ENCODE measurements at regions of chr9 and their contacts with region 1.

Region 1: GRCh38 chr9:121992571-121993212 is 100.4 kb downstream of the TTLL11 start:
- DNase-seq: peak in 4 of 5 donors; percentile 58 to 71 (median 64)
- ATAC-seq: peak; percentile 61 to 78 (median 69)
- H3K4me3 ChIP-seq: no peak overlapping the region
- H3K27ac ChIP-seq: no peak overlapping the region
- H3K4me1 ChIP-seq: peaks cover 0 to 25% (median 4%) of the 10 kb centered on the region in 12 donors
- H3K27me3 ChIP-seq: no peaks in the 10 kb centered on the region
- CTCF ChIP-seq: peak; percentile 77 to 95 (median 86)
- POLR2A ChIP-seq: no peak

Region 2: GRCh38 chr9:121634329-121635261 is 358.1 kb before region 1 on chr9:
- intact Hi-C with region 1: loop called in 9 of 10 experiments (anchors 2 to 10 kb)
- DNase-seq: no peak
- ATAC-seq: peak; percentile 60 to 79 (median 64)
- H3K4me3 ChIP-seq: no peak overlapping the region
- H3K27ac ChIP-seq: peak overlapping the region in 5 of 12 donors; percentile 6 to 66 (median 34)
- H3K4me1 ChIP-seq: peaks cover 15 to 60% (median 43%) of the 10 kb centered on the region in 12 donors
- H3K27me3 ChIP-seq: no peaks in the 10 kb centered on the region
- CTCF ChIP-seq: peak; percentile 35 to 74 (median 62)
- POLR2A ChIP-seq: no peak

Region 3: DNA sequence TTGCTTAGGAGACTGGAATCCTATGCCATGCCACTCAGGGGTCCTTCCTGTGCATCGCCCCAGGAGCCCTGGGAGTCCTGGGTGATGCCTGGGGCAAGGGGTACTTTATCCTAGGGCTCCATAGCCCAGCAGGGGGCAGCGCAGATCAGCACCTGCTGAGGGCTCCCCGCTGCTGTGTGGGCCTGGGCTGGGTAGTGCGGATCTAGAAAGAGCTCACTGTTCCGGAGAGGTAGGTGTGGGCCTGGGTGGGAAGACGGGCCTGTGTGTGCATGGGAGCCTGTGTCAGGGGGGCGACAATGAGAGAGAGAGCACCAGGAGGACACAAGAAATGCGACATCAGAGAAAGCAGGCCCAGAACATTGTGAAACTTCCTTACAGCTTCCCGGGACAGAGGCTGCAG is 352.6 kb before region 1 on chr9:
- intact Hi-C with region 1: loop called in 9 of 10 experiments (anchors 2 to 10 kb)
- DNase-seq: peak; percentile 62 to 82 (median 65)
- ATAC-seq: peak; percentile 55 to 81 (median 74)
- H3K4me3 ChIP-seq: no peak overlapping the region
- H3K27ac ChIP-seq: peak overlapping the region in 10 of 12 donors; percentile 36 to 66 (median 55)
- H3K4me1 ChIP-seq: peaks cover 19 to 75% (median 52%) of the 10 kb centered on the region in 12 donors
- H3K27me3 ChIP-seq: no peaks in the 10 kb centered on the region
- CTCF ChIP-seq: peak; percentile 53 to 76 (median 64)
- POLR2A ChIP-seq: no peak

Region 4: GRCh38 chr9:121686930-121687541 is 305.7 kb before region 1 on chr9:
- intact Hi-C with region 1: loop called in 9 of 10 experiments (anchors 2 to 10 kb)
- DNase-seq: peak in 4 of 5 donors; percentile 71 to 84 (median 76)
- ATAC-seq: peak; percentile 56 to 72 (median 62)
- H3K4me3 ChIP-seq: no peak overlapping the region
- H3K27ac ChIP-seq: peak overlapping the region in 4 of 12 donors; percentile 14 to 42 (median 36)
- H3K4me1 ChIP-seq: peaks cover 3 to 68% (median 28%) of the 10 kb centered on the region in 12 donors
- H3K27me3 ChIP-seq: no peaks in the 10 kb centered on the region
- CTCF ChIP-seq: peak; percentile 70 to 91 (median 82)
- POLR2A ChIP-seq: no peak

Region 5: GRCh38 chr9:121692606-121693387 is 299.9 kb before region 1 on chr9:
- intact Hi-C with region 1: loop called (anchors 2 to 10 kb)
- DNase-seq: peak in 2 of 5 donors; percentile 61 to 67
- ATAC-seq: peak; percentile 31 to 86 (median 74)
- H3K4me3 ChIP-seq: no peak overlapping the region
- H3K27ac ChIP-seq: peak overlapping the region in 11 of 12 donors; percentile 1 to 70 (median 42)
- H3K4me1 ChIP-seq: peaks cover 6 to 48% (median 30%) of the 10 kb centered on the region in 12 donors
- H3K27me3 ChIP-seq: peaks cover 0 to 11% (median 0%) of the 10 kb centered on the region in 9 donors
- CTCF ChIP-seq: no peak
- POLR2A ChIP-seq: no peak

Region 6: GRCh38 chr9:121744002-121744686 is 248.5 kb before region 1 on chr9:
- intact Hi-C with region 1: loop called in 9 of 10 experiments (anchors 5 to 10 kb)
- DNase-seq: peak in 4 of 5 donors; percentile 70 to 79 (median 75)
- ATAC-seq: peak; percentile 61 to 72 (median 63)
- H3K4me3 ChIP-seq: peak overlapping the region; percentile 15 to 75 (median 56)
- H3K27ac ChIP-seq: peak overlapping the region; percentile 87 to 99 (median 94)
- H3K4me1 ChIP-seq: peaks cover 23 to 99% (median 94%) of the 10 kb centered on the region in 12 donors
- H3K27me3 ChIP-seq: no peaks in the 10 kb centered on the region
- CTCF ChIP-seq: peak; percentile 18 to 78 (median 55)
- POLR2A ChIP-seq: no peak

Region 7: DNA sequence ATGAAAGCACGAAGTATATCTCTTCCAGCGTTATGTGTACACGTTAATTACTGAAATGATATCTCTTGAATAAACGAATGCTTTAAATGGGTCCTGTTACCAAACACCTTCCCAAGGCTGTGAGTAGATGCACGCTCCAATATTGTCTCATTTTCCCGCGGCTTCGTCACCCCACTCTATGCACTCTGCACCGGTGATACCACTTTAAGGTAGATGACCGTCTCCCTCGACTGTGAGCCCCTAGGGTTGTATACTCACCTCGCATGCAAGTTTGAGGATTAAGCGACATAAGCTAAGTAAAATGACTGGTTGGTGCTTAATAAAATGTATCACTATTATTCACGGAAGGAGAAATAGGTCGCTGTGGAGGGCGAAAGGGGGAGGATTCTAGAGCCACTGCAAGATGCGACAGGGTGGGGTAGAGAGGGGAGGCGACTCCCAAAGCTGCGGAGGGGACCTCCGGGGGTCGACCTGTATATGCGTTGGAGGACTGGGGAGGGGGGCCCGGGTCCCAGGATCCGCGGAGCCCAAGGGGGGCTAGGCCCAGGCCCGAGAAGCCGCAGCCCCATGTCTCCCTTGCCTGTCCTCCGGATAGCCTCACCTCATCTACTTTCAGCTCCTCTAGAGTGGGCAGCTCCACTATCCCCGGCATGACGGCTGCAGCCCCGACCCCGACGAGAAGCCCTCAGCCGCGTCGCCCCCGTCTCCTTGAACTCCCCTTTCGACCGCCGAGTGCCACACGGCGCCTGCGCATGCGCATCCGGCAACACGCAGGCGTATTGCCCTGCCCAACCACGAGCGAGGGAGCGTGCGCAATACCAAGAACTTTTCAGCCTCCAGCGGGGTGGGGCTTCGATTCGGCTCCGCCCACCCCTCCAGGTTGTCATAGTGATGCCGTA is 166.6 kb after region 1 on chr9 and contains the starts of genes MORN5 and NDUFA8:
- intact Hi-C with region 1: no loop called
- DNase-seq: peak; percentile 95 to 98 (median 97)
- ATAC-seq: peak; percentile 96 to 99 (median 97)
- H3K4me3 ChIP-seq: peak within 1 kb of the TSS; percentile 71 to 98 (median 89)
- H3K27ac ChIP-seq: peak within 1 kb of the TSS; percentile 90 to 98 (median 96)
- H3K4me1 ChIP-seq: peaks cover 4 to 48% (median 34%) of the 10 kb centered on the region in 12 donors
- H3K27me3 ChIP-seq: no peaks in the 10 kb centered on the region
- CTCF ChIP-seq: peak in 3 of 12 donors; percentile 7 to 10 (median 8)
- POLR2A ChIP-seq: peak; percentile 93 to 94
- total RNA-seq, gene MORN5: not detected
- total RNA-seq, gene NDUFA8: 183 to 316 (median 260) TPM

Region 8: DNA sequence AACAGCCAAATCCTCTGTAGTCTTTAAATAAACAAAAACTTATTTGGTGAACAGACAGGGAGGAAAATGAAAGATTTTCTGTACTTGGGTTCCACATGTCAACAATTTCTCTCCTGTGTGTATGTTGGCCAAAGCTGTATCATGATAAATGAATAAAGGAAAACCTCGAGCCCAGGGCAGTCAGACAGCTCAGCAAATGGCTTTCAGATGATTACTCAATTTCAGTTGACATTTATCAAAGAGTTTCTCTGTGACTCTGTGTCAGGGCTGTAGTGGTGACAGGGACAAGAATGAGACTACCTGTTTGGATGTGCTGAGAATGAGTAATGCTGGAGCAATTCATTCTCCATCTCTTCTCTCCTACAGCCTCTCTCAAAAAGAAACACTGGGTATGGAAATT is 332.4 kb after region 1 on chr9:
- intact Hi-C with region 1: no loop called
- DNase-seq: no peak
- ATAC-seq: peak in 2 of 4 donors; percentile 46 to 48
- H3K4me3 ChIP-seq: no peak overlapping the region
- H3K27ac ChIP-seq: no peak overlapping the region
- H3K4me1 ChIP-seq: peaks cover 0 to 25% (median 3%) of the 10 kb centered on the region in 12 donors
- H3K27me3 ChIP-seq: no peaks in the 10 kb centered on the region
- CTCF ChIP-seq: no peak
- POLR2A ChIP-seq: no peak

Measured in heart left ventricle (tissue), 16 donors.